ENCODE measurements at regions of chr5 and their contacts with region 1.

Region 1: DNA sequence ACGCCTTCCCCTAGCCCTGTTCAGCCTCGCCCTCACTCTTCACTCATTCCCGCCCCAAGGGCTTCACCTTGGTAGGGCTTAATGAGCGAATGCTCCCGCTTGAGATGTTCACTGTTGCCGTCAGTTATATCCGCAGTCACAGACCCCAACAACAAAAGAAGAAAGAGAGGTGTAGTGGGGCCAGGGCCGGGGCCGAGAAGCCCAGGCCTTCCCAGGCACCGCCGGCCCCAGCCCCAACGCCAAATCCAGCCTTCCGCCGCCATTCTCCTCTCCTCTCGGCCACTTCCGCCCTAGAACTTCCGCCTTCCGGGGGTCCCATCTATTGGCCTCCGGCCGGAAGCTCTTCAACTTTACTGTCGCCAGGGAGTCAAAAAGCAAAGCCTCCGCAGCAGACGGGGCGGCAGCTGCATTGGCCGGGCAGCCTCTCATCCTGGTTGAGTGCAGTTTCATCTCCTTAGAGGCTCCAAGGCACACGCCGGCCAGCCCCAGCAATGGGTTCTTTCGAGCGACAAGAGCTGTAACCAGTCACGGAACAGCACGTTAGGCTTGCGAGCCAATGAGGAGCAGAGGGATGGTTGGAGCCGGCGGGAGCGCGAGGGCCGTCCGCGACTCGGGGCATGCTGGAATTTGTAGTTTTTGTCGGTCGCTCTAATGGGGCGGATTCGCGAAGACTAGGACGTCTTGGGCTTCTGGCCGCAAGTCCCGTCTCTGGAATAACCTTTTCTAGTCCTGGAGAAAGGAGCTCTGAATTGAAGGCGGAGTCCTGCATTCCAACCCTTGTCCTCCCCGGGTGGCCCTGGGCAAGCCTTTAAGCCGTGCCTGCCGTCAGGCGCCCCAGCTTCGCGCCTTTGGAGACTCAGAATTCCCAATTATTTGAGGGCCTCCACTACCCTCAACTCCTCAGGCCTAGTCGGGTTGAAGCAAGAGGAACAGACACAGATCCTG is at the start of gene LMAN2:
- DNase-seq: peak; percentile 80
- H3K4me3 ChIP-seq: peak within 1 kb of the TSS; percentile 97
- CTCF ChIP-seq: no peak

Region 2: DNA sequence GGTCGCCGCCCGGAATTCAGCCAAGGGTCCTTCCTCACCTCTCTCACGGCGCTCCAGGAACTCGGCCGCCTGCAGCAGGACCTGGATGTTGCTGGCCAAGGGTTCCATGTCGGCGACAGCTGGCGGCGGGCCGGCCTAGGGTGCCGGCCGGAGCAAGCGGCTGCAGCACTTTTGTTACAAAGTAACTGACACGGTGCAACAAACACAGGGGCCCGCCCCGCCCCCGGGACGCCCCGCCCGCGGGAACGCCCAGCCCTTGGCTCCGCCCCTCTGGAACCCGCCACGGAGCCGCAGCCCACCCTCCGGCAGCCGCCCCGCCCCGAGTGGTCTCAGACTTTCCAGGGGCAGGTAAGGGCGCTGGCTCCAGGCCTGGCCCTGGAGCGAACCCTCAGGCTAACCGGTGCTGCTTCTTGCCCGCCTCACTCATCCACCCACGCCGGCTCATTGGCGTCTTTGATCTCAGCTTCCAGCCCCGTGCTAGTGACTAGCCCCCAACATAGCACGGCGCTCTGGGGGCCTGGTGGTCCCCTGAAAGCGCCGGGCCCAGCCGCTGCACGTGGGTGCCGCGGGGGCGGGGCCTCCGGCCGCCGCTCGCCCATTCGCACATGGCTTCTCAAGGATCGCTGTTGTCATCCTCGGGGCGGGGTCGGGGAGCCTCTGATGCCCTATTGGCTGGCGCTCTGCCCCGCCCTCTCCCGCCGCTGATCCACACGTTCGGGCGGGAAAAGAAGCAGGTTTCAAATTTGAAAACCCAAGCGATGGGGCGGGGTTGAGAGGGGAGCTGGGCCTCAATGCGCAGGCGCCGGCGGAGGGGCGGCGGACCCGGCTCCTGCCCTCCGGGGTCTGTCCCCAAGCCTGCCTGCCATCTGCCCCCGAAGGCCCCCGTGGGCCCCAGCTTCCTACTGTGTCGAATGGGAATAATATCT is 39.7 kb before region 1 on chr5 and contains the start of gene MXD3:
- CTCF ChIA-PET with region 1: interaction called, 26 read pairs
- POLR2A ChIA-PET with region 1: no interaction called
- DNase-seq: no peak
- H3K4me3 ChIP-seq: peak within 1 kb of the TSS; percentile 68
- CTCF ChIP-seq: no peak

Region 3: DNA sequence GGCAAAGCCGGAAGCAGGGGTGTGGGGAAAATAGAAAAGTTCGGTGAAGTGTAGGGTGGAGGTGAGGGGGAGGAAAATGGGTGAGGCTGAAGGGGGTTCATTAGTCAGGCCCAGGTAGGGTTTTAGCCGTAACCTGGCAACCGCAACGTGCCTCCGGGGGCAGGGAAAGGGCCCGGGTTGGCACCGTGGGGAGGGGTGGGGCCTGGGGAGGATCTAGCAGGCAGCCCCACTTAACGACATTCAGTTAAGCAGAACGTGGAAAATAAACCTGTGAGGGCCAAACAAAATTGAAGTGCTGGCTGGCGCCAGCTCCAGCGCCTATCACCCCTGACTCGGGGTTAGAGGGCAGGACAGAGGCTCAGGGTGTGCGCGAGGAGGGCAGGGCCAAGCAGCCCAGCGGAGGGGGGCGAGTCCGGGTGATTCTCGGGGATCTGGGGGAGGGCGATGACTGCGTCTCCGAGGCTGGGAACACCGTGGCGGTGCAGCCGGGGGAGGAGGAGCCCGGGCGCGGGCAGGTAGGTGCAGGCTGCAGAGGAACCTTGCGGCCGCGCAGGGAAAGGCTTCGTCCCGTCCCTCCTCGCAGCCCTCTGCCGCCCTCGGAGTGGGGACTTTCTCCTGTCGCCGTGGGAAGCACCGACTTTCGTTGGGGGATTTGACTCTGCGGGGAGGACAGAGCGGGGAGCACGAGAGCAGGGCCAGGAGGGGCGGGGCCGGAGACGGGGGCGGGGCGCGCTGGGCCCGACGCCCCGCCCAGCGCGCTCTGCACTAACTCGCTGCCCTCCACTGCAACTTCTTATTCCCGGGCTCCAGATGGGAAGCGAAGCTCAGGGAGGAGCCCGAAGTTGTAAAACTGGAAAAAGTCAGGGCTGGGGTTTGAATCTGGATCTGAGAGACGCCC is 11.2 kb after region 1 on chr5:
- CTCF ChIA-PET with region 1: interaction called, 58 read pairs
- POLR2A ChIA-PET with region 1: interaction called, 5 read pairs
- DNase-seq: no peak
- H3K4me3 ChIP-seq: peak overlapping the region; percentile 49
- CTCF ChIP-seq: no peak

Region 4: DNA sequence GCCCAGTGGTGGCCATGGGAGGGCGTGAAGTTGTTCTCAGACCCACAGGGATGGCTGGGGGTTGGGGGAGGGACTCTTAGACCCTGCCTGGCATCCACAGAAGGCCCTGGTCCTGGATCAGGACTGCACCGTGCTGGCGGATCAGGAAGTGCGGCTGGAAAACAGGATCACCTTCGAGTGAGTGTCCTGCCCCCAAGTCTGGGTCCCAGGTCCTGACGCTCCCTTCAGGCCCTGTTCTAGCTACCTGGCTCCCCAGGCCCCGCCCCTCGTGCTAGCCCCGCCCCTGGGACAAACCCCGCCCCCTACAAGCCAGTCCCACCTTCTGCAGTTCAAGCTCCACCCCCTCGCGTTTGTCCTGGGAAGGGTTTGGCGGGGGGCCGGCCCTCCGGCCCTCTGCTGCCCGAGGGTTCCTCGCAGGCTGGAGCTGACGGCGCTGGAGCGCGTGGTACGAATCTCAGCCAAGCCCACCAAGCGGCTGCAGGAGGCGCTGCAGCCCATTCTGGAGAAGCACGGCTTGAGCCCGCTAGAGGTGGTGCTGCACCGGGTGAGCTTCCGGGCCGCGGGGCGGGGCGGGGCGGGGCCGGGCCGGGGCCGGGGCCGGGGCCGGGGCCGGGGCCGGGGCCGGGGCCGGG is 18.9 kb after region 1 on chr5:
- CTCF ChIA-PET with region 1: interaction called, 58 read pairs
- POLR2A ChIA-PET with region 1: interaction called, 3 read pairs
- DNase-seq: no peak
- H3K4me3 ChIP-seq: peak overlapping the region; percentile 60
- CTCF ChIP-seq: peak; percentile 76

Measured in AG04449 (cell line).